ENCODE measurements at regions of chr16 and their contacts with region 1.

Region 1: GRCh38 chr16:50038756-50039529 is 13.9 kb downstream of the CNEP1R1 start:
- DNase-seq: no peak
- H3K4me3 ChIP-seq: no peak overlapping the region
- H3K4me3 Mint-ChIP-seq: no peak overlapping the region
- H3K27ac ChIP-seq: no peak overlapping the region
- H3K27ac Mint-ChIP-seq: peak overlapping the region in 1 of 8 donors; percentile 58
- H3K4me1 ChIP-seq: no peaks in the 10 kb centered on the region
- H3K4me1 Mint-ChIP-seq: no peaks in the 10 kb centered on the region
- H3K27me3 ChIP-seq: no peaks in the 10 kb centered on the region
- H3K27me3 Mint-ChIP-seq: peaks cover 1 to 14% of the 10 kb centered on the region in 2 donors

Region 2: DNA sequence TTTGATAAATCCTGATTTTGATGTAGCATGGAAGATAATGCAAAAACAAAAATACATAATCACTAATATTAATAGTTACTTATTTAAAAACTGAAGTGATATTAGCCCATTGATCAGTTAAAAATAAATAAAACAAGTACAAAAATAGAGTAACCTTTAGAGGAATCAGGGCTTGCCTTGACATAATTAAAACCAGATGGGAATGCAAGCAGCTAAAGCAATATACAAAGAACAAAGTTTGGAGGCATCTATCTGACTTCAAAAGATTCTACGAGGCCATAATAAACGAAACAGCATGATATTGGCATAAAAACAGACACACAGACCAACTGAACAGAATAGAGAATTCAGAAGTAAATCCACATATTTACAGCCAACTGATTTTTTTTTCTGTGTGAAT is 11.9 kb after region 1 on chr16:
- CTCF ChIA-PET with region 1: no interaction called
- POLR2A ChIA-PET with region 1: no interaction called
- DNase-seq: no peak
- H3K4me3 ChIP-seq: no peak overlapping the region
- H3K4me3 Mint-ChIP-seq: no peak overlapping the region
- H3K27ac ChIP-seq: no peak overlapping the region
- H3K27ac Mint-ChIP-seq: no peak overlapping the region
- H3K4me1 ChIP-seq: no peaks in the 10 kb centered on the region
- H3K4me1 Mint-ChIP-seq: no peaks in the 10 kb centered on the region
- H3K27me3 ChIP-seq: no peaks in the 10 kb centered on the region
- H3K27me3 Mint-ChIP-seq: peaks cover 11 to 20% of the 10 kb centered on the region in 2 donors

Region 3: GRCh38 chr16:50245417-50246298 is 206.7 kb after region 1 on chr16:
- CTCF ChIA-PET with region 1: no interaction called
- POLR2A ChIA-PET with region 1: interaction called, 11 read pairs
- DNase-seq: peak in 3 of 5 donors; percentile 34 to 43 (median 35)
- H3K4me3 ChIP-seq: peak overlapping the region; percentile 47
- H3K4me3 Mint-ChIP-seq: peak overlapping the region; percentile 63 to 90 (median 79)
- H3K27ac ChIP-seq: peak overlapping the region; percentile 51
- H3K27ac Mint-ChIP-seq: peak overlapping the region in 3 of 8 donors; percentile 4 to 36 (median 29)
- H3K4me1 ChIP-seq: peaks cover 6% of the 10 kb centered on the region
- H3K4me1 Mint-ChIP-seq: peaks cover 8 to 15% (median 8%) of the 10 kb centered on the region in 3 donors
- H3K27me3 ChIP-seq: no peaks in the 10 kb centered on the region
- H3K27me3 Mint-ChIP-seq: no peaks in the 10 kb centered on the region

Measured in CD8-positive, alpha-beta memory T cell (primary cell).